ENCODE measurements at regions of chr19 and their contacts with region 1.

Region 1: DNA sequence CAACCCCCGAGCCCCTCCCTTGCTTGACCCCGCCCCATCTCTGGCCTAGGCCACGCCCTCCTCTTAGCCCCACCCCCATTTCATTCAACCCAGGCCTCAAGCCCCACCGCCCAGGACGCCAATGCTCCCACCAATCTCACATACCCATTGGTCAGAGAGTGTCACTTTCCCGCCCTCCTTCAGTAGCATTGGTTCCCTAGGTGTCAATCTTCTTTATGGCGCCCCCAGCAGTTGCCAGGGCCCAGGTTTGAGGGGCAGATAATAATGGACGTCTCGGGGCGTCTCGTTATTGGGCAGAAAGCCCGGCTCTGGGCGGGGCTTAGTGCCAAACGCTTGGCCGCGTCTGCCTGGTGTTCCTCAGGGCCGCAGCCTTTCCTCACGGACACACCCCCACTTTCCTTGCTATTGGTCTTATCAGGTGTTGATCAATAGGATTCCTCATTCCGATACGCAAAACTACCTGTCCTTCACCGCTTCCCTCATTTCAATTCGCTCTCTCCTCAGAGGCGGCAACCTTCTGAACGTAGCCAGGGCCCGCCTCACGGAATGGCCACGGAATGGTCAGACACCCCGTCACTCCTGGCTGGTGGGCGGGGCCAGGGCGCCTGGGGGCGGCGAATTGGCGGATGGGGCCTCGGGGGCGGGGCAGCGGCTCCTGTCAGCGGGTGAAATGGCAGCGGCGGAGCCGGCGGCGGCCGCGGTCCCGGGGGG is at the start of gene EVI5L:
- DNase-seq: peak; percentile 99
- H3K4me3 Mint-ChIP-seq: peak within 1 kb of the TSS; percentile 86
- H3K27ac Mint-ChIP-seq: peak within 1 kb of the TSS; percentile 69
- H3K4me1 Mint-ChIP-seq: peaks cover 21% of the 10 kb centered on the region
- H3K27me3 Mint-ChIP-seq: peaks cover 15% of the 10 kb centered on the region
- total RNA-seq, gene EVI5L: 4.4 TPM in 2 replicates

Region 2: DNA sequence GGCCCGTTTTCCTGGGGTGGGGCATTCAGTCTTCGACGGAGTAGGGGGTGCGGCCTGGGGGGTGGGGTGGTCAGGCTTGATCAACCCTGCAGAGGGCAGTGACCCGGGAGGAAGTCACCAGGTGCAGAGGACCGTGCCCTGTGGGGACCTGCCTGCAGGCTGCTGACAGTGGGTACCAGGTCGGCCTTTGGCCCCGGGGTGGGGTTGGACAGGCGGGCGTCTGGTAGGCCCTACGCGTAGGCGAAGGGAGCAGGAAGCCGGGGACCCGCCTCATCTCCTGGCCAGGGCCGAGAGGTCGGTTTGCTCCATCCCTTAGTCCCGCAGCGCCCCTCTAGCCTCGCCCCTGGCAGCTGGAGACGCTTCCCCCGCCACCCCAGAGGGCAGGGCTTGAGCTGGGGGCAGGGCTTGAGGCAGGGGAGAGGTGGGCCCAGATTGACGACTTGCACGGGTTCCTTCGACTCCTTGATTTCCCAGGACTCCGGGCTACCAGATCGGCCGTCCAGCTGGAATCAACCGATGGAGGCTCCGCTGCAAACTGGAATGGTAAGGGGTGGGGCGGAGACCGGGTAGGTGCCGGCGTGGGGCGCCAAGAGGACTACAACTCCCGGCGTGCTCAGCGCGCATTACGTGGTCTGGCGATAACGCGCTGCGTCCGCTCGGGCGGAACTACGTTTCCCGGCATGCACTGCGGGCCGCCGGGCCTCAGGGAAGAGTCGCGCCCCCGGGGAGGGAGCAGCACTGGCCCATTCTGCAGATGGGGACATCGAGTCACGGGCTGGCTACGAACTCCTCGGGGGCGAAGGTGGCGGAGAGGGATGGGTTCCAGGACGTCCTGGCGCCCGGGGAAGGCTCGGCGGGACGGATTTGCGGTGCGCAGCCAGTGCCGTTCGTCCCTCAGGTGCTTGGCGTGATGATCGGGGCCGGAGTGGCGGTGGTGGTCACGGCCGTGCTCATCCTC is 294.4 kb before region 1 on chr19 and contains the start of gene PNPLA6:
- intact Hi-C with region 1: loop called (anchors 1 kb)
- DNase-seq: peak; percentile 91
- H3K4me3 Mint-ChIP-seq: peak within 1 kb of the TSS; percentile 95
- H3K27ac Mint-ChIP-seq: peak within 1 kb of the TSS; percentile 92
- H3K4me1 Mint-ChIP-seq: peaks cover 14% of the 10 kb centered on the region
- H3K27me3 Mint-ChIP-seq: no peaks in the 10 kb centered on the region
- total RNA-seq, gene PNPLA6: 131 and 136 TPM in 2 replicates

Region 3: DNA sequence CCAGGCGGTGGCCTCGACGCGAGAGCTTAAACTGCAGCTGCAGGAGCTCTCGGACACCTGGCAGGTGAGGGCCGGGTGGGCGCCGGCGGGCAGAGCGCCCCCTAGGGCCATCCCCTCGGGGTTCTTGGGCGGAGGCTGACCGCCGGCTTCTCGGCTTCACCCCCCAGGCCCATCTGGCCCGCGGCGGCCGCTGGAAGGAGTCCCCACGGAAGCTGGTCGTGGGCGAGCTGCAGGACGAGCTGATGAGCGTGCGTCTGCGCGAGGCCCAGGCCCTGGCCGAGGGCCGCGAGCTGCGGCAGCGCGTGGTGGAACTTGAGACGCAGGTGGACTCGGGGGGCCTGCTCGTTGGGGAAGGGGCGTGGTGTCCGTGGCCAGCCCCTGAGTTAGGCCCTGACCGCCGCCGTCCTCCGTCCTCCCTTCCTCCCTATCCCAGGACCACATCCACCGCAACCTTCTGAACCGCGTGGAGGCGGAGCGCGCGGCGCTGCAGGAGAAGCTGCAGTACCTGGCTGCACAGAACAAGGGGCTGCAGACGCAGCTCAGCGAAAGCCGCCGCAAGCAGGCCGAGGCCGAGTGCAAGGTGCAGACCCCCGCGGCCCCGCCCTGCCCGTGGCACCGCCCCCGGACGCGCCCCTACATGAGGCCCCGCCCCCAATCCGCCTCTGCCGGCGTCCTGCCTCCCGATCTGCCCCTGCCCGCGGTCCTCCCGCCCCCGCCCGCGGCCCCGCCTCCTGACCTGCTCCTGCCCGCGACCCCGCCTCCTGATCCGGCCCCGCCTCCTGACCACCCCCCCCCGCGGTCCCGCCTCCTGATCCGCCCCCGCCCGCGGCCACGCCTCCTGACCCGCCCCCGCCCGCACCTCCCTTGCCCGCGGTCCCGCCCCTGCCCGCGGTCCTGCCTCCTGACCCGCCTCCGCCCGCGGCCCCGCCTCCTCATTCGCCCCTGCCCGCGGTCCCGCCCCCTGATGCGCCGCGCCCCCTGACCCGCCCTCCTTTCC is 32.5 kb after region 1 on chr19:
- intact Hi-C with region 1: loop called (anchors 1 kb)
- DNase-seq: peak; percentile 58
- H3K4me3 Mint-ChIP-seq: peak overlapping the region; percentile 33
- H3K27ac Mint-ChIP-seq: no peak overlapping the region
- H3K4me1 Mint-ChIP-seq: peaks cover 7% of the 10 kb centered on the region
- H3K27me3 Mint-ChIP-seq: peaks cover 23% of the 10 kb centered on the region

Region 4: DNA sequence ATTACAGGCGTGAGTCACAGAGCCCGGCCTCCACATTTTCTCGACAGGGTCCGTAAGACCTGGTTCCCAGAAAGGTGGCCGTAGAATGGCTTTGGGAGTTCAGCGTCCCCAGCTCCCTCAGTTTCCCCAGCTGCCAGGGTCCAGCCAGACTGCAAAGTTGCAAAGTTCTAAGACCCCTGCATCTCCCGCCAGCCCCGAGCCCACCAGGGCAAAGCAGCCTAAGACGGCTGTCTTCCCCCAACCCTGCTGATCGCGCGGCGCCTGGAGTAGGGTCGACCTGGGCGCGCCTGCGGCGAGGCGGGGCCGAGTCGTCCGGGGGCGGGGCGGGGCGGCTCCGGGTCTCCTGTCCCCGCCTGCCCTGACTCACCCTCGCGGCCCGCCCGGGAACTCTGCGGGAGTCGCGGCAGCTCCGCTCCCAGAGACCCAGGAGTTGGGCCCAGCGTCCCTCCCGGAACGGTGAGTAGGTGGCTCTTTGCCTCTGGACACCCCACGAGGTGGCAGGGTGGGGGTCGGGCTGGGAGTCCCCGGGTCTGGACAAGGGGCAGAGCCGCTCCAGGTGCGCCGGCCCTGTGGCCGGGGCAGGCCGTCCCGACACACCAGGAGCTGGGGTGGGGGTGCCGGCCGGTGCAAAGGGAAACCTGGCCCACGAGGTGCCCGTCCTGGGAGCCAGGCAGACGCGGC is 58.6 kb after region 1 on chr19 and contains the start of gene LRRC8E:
- intact Hi-C with region 1: no loop called
- DNase-seq: no peak
- H3K4me3 Mint-ChIP-seq: no peak within 1 kb of the TSS
- H3K27ac Mint-ChIP-seq: no peak within 1 kb of the TSS
- H3K4me1 Mint-ChIP-seq: no peaks in the 10 kb centered on the region
- H3K27me3 Mint-ChIP-seq: peaks cover 22% of the 10 kb centered on the region
- total RNA-seq, gene LRRC8E: not detected in 2 replicates

Region 5: DNA sequence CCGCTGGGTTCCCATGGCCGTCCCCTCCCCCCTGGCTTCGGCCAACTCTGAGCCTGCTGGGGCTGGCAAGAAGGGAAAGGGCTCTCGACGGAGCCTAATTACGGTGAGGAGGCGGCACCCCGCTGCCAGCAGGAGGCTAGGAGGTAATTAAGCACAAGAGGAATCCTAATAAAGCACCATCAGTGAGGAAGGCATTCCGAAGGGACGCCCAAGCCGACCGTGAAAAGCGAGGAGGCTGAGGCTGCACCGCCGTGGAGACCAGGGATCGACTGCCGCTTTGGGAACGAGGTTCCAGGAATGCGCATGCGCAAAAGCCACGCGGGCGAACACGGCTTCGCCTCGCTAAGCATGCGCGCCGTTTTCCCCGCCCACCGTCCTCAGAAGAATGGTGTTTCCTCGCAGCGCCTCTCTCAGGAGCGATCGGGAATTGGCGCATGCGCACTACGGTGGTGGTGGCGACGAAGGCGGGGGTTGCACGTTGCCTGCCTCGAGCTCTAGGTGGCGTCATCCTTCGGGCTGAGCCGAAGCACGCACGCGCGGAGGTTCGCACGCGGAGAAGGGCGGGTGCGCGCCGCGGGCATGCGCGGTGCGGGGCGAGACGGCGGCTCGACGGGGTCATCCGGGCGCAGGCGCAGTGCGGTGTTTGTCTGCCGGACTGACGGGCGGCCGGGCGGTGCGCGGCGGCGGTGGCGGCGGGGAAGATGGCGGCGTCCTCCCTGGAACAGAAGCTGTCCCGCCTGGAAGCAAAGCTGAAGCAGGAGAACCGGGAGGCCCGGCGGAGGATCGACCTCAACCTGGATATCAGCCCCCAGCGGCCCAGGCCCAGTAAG is 73.7 kb after region 1 on chr19 and contains the start of gene MAP2K7:
- intact Hi-C with region 1: loop called (anchors 1 kb)
- DNase-seq: peak; percentile 100
- H3K4me3 Mint-ChIP-seq: peak within 1 kb of the TSS; percentile 90
- H3K27ac Mint-ChIP-seq: peak within 1 kb of the TSS; percentile 94
- H3K4me1 Mint-ChIP-seq: peaks cover 29% of the 10 kb centered on the region
- H3K27me3 Mint-ChIP-seq: peaks cover 2% of the 10 kb centered on the region
- total RNA-seq, gene MAP2K7: 47.6 and 51.9 TPM in 2 replicates

Region 6: GRCh38 chr19:8050274-8051096 is 220.8 kb after region 1 on chr19:
- intact Hi-C with region 1: loop called (anchors 1 kb)
- DNase-seq: peak; percentile 73
- H3K4me3 Mint-ChIP-seq: peak overlapping the region; percentile 49
- H3K27ac Mint-ChIP-seq: peak overlapping the region; percentile 52
- H3K4me1 Mint-ChIP-seq: peaks cover 27% of the 10 kb centered on the region
- H3K27me3 Mint-ChIP-seq: peaks cover 13% of the 10 kb centered on the region